CD4-positive, alpha-beta memory T cell (primary cell): ENCODE measurements at regions of chr7 and their contacts with region 1.

Region 1: DNA sequence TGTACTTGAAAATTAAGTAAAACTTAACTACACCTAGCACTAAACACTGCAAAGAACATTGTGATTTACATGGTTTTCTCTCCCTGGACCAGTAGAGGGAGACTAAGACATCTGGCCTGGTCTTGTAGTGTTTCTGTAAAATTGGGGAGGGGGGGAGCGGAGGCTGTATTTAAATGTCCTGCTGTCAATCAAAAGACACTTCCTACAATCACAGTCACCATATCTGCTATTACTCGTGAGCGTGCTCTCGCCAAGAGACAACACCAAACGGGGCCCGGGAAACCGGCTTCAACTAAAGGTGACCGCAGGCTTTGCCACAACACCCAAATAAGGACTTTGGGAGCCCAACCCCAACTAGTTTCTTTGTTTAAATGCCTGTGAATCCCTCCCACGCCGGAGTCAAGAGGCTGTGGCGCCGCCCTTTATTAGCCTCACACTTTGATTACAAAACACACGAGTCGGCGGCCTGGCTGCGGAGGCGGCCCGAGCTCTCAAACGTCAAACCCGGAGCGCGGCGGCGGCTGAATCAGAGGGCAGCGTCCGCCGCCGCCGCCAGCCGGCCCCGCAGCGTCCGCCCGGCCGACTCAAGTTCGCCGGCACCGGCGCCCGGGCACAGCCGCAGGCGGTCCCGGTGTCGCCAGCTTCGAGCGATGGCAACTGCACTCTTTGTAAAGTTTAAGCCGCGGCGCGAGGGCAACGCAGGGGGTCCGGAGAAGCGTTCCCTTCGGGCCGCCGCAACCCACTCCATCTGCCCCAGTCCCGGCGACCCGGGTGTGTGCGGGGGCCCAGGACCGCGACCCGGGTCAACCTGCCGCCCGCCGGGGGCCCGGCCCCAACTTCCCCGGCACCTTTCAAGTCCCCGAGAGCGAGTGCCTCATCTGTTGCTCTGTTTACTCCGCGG is 1.3 kb downstream of the KDM7A start:
- DNase-seq: peak; percentile 91 to 98 (median 95)
- H3K4me3 ChIP-seq: peak overlapping the region in 1 of 2 donors; percentile 60
- H3K4me3 Mint-ChIP-seq: peak overlapping the region; percentile 82 to 92 (median 90)
- H3K27ac ChIP-seq: peak overlapping the region; percentile 85
- H3K27ac Mint-ChIP-seq: peak overlapping the region; percentile 82 to 98 (median 94)
- H3K4me1 ChIP-seq: peaks cover 41% of the 10 kb centered on the region
- H3K4me1 Mint-ChIP-seq: peaks cover 29 to 56% (median 45%) of the 10 kb centered on the region in 4 donors
- H3K27me3 ChIP-seq: no peaks in the 10 kb centered on the region
- H3K27me3 Mint-ChIP-seq: no peaks in the 10 kb centered on the region

Region 2: GRCh38 chr7:139095194-139095659 is 1080.2 kb before region 1 on chr7:
- CTCF ChIA-PET with region 1: no interaction called
- POLR2A ChIA-PET with region 1: interaction called, 4 read pairs
- intact Hi-C with region 1: loop called (anchors 10 kb)
- DNase-seq: peak; percentile 91 to 96 (median 94)
- H3K4me3 ChIP-seq: peak overlapping the region; percentile 34 to 39
- H3K4me3 Mint-ChIP-seq: peak overlapping the region; percentile 78 to 93 (median 88)
- H3K27ac ChIP-seq: peak overlapping the region; percentile 61
- H3K27ac Mint-ChIP-seq: peak overlapping the region; percentile 88 to 97 (median 93)
- H3K4me1 ChIP-seq: peaks cover 90% of the 10 kb centered on the region
- H3K4me1 Mint-ChIP-seq: peaks cover 62 to 94% (median 78%) of the 10 kb centered on the region in 4 donors
- H3K27me3 ChIP-seq: no peaks in the 10 kb centered on the region
- H3K27me3 Mint-ChIP-seq: no peaks in the 10 kb centered on the region

Region 3: DNA sequence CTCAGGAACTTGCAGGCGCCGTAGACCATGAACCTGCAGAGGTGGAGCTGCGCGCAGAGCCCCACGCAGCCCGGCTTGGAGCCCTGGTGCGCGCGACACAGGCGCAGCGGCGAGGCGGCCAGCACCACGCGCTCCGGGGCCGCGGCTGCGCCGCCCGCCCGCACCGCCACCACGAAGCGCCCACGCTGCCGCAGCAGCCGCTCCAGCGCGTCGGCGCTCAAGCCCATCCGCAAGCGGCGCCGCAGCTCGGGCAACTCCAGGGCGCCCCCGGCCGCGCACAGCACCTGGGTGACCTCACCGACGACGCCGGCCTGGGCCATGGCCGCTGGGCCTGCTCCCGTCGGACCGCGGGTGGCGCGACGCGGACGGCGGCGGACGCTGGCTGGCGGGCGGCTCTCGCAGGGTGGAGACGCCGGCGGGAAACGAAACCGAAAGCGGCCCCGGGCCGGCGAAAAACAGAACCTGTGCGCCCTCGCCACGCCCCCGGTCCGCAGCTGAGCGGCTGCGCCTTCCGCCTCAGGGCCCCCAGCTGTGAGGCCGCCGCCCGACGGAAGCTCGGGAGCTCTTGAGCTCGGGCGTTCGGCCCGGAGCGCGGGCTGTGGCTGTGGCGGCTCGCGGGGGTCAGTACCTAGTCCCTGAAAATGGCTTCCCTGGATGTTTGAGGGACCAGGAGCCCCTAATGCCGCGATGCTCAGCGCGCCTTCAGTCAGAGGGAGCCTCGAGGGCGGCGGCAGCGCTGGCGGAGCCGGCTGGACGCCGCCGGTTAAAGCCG is 112.8 kb before region 1 on chr7 and contains the start of gene PARP12:
- CTCF ChIA-PET with region 1: no interaction called
- POLR2A ChIA-PET with region 1: interaction called, 19 read pairs
- intact Hi-C with region 1: loop called (anchors 2 kb)
- DNase-seq: peak; percentile 84 to 89 (median 86)
- H3K4me3 ChIP-seq: peak within 1 kb of the TSS; percentile 54 to 89
- H3K4me3 Mint-ChIP-seq: peak within 1 kb of the TSS; percentile 92 to 96 (median 95)
- H3K27ac ChIP-seq: peak within 1 kb of the TSS; percentile 84
- H3K27ac Mint-ChIP-seq: peak within 1 kb of the TSS; percentile 86 to 99 (median 91)
- H3K4me1 ChIP-seq: peaks cover 45% of the 10 kb centered on the region
- H3K4me1 Mint-ChIP-seq: peaks cover 31 to 56% (median 43%) of the 10 kb centered on the region in 4 donors
- H3K27me3 ChIP-seq: no peaks in the 10 kb centered on the region
- H3K27me3 Mint-ChIP-seq: no peaks in the 10 kb centered on the region
- total RNA-seq, gene PARP12: 91.8 to 96.6 TPM

Region 4: GRCh38 chr7:140230861-140231770 is 55.6 kb after region 1 on chr7:
- CTCF ChIA-PET with region 1: interaction called, 29 read pairs
- POLR2A ChIA-PET with region 1: interaction called, 269 read pairs
- intact Hi-C with region 1: loop called (anchors 1 kb)
- DNase-seq: peak; percentile 25 to 76 (median 46)
- H3K4me3 ChIP-seq: peak overlapping the region; percentile 50 to 83
- H3K4me3 Mint-ChIP-seq: peak overlapping the region; percentile 92 to 97 (median 94)
- H3K27ac ChIP-seq: peak overlapping the region; percentile 84
- H3K27ac Mint-ChIP-seq: peak overlapping the region; percentile 95 to 100 (median 98)
- H3K4me1 ChIP-seq: peaks cover 24% of the 10 kb centered on the region
- H3K4me1 Mint-ChIP-seq: peaks cover 25 to 51% (median 30%) of the 10 kb centered on the region in 4 donors
- H3K27me3 ChIP-seq: no peaks in the 10 kb centered on the region
- H3K27me3 Mint-ChIP-seq: no peaks in the 10 kb centered on the region

Region 5: GRCh38 chr7:140260352-140261104 is 85.1 kb after region 1 on chr7:
- CTCF ChIA-PET with region 1: interaction called, 3 read pairs
- POLR2A ChIA-PET with region 1: interaction called, 36 read pairs
- intact Hi-C with region 1: loop called (anchors 1 kb)
- DNase-seq: no peak
- H3K4me3 ChIP-seq: no peak overlapping the region
- H3K4me3 Mint-ChIP-seq: no peak overlapping the region
- H3K27ac ChIP-seq: no peak overlapping the region
- H3K27ac Mint-ChIP-seq: peak overlapping the region in 3 of 7 donors; percentile 15 to 47 (median 35)
- H3K4me1 ChIP-seq: peaks cover 25% of the 10 kb centered on the region
- H3K4me1 Mint-ChIP-seq: peaks cover 18 to 34% (median 27%) of the 10 kb centered on the region in 4 donors
- H3K27me3 ChIP-seq: no peaks in the 10 kb centered on the region
- H3K27me3 Mint-ChIP-seq: no peaks in the 10 kb centered on the region

Region 6: GRCh38 chr7:140397784-140398750 is 222.6 kb after region 1 on chr7 and contains the start of gene SLC37A3:
- CTCF ChIA-PET with region 1: no interaction called
- POLR2A ChIA-PET with region 1: interaction called, 7 read pairs
- intact Hi-C with region 1: loop called (anchors 5 kb)
- DNase-seq: peak; percentile 77 to 85 (median 81)
- H3K4me3 ChIP-seq: peak within 1 kb of the TSS; percentile 33 to 63
- H3K4me3 Mint-ChIP-seq: peak within 1 kb of the TSS; percentile 90 to 95 (median 90)
- H3K27ac ChIP-seq: peak within 1 kb of the TSS; percentile 77
- H3K27ac Mint-ChIP-seq: peak within 1 kb of the TSS; percentile 71 to 94 (median 88)
- H3K4me1 ChIP-seq: peaks cover 21% of the 10 kb centered on the region
- H3K4me1 Mint-ChIP-seq: peaks cover 16 to 26% (median 20%) of the 10 kb centered on the region in 4 donors
- H3K27me3 ChIP-seq: no peaks in the 10 kb centered on the region
- H3K27me3 Mint-ChIP-seq: no peaks in the 10 kb centered on the region
- total RNA-seq, gene SLC37A3: 32.5 to 42.5 TPM

Region 7: DNA sequence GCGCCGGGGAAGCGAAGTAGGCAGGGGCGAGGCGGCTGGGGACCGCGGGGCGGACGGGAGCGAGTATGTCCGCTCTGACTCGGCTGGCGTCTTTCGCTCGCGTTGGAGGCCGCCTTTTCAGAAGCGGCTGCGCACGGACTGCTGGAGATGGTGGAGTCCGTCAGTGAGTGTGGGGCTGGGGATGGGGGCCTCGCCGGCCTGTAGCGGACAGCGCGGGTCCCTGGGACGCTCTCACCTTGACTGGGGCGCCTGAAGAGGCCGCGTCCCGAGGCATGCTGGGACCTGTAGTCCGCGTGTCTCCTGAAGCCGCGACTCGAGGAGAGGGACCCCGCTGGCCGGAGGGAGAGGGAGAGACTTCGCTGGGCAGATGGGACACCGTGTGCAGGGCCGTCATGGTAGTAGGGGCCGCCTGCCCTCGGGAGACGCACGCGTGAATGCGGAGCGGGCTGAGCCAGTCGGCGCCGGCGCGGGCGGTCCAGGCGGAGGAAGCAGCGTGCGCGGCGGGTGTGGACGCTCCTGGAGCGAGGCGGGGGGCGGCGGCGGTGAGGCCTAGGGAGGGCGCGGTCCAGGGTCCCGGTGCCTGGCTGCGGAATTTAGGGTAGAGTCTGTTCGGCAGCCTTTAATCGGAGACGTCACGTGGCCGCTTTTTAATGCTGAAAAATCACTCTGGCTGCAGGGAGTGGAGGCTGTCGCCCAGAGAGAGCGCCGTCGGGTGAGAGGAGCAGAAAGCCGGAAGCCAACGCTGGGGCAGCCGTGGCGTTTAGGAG is 521.4 kb after region 1 on chr7 and contains the start of gene NDUFB2:
- CTCF ChIA-PET with region 1: no interaction called
- POLR2A ChIA-PET with region 1: interaction called, 3 read pairs
- intact Hi-C with region 1: loop called (anchors 2 kb)
- DNase-seq: peak; percentile 84 to 90 (median 90)
- H3K4me3 ChIP-seq: peak within 1 kb of the TSS; percentile 66 to 92
- H3K4me3 Mint-ChIP-seq: peak within 1 kb of the TSS; percentile 93 to 98 (median 97)
- H3K27ac ChIP-seq: peak within 1 kb of the TSS; percentile 89
- H3K27ac Mint-ChIP-seq: peak within 1 kb of the TSS; percentile 96 to 100 (median 98)
- H3K4me1 ChIP-seq: peaks cover 32% of the 10 kb centered on the region
- H3K4me1 Mint-ChIP-seq: peaks cover 18 to 48% (median 33%) of the 10 kb centered on the region in 4 donors
- H3K27me3 ChIP-seq: no peaks in the 10 kb centered on the region
- H3K27me3 Mint-ChIP-seq: no peaks in the 10 kb centered on the region
- total RNA-seq, gene NDUFB2: 94.4 to 98.6 TPM